ENCODE measurements at regions of chr4 and their contacts with region 1.

Region 1: DNA sequence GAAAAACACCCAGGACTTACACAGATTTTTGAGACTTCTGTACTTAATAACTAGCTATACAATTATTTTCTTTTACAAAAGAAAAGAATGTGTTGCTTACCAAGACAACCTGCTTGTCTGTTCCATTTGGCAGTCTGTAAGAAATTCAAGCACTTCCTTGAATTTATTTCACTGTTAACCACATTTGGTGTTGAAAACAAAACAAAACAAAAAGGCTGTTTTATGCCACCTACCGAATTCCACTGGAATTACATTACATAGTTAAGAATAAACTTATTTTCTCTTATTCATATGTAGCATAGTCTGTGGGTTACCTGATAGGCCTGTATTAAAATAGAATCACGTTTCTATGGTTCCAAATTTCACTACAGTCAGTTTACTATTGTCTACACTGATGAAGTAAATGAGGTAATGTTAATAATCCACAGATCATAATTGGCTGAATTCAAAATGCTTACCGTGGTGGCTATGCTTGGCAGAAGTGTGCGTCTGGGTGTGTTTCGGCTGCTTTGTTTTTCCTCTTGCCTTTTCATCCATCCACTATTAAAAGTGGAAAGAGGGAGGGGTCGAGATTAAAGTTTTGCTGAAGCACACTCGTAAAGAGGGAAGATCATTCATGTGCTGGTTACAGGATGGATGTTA is at the start of gene TLR1:
- DNase-seq: no peak
- ATAC-seq: peak; percentile 77 to 86 (median 82)
- H3K4me3 ChIP-seq: peak within 1 kb of the TSS; percentile 8 to 42 (median 31)
- H3K27ac ChIP-seq: peak within 1 kb of the TSS; percentile 74 to 84 (median 82)
- H3K4me1 ChIP-seq: peaks cover 0 to 5% (median 0%) of the 10 kb centered on the region in 4 donors
- H3K27me3 ChIP-seq: no peaks in the 10 kb centered on the region
- CTCF ChIP-seq: peak; percentile 62 to 70 (median 65)
- POLR2A ChIP-seq: no peak
- total RNA-seq, gene TLR1: 5.1 to 10.5 (median 7.8) TPM

Region 2: GRCh38 chr4:38574559-38575333 is 230.0 kb before region 1 on chr4:
- intact Hi-C with region 1: no loop called
- DNase-seq: peak; percentile 77 to 85 (median 83)
- ATAC-seq: peak; percentile 93 to 97 (median 97)
- H3K4me3 ChIP-seq: no peak overlapping the region
- H3K27ac ChIP-seq: no peak overlapping the region
- H3K4me1 ChIP-seq: peaks cover 0 to 9% (median 0%) of the 10 kb centered on the region in 4 donors
- H3K27me3 ChIP-seq: no peaks in the 10 kb centered on the region
- CTCF ChIP-seq: no peak
- POLR2A ChIP-seq: no peak

Region 3: DNA sequence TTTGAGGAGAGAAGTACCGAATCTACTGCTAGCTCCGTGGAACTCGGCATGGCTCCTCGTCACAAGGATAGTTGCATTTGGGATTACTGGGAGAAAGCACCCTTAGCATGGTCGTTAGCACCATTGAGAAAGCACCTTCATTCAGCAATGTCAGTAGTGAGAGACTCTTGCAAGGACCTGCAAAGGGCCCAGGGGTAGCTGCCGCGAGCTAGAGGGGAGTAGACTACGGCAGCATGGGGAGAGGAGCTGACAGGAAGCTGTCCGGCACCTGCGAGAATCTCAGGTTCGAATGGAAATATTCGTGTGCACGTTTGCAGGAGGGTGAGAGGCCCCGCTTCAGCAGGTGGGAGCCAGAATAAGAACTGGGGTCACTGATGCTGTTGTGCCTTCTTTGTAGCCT is 42.2 kb before region 1 on chr4:
- intact Hi-C with region 1: loop called in 1 of 2 experiments (anchors 5 kb)
- DNase-seq: no peak
- ATAC-seq: no peak
- H3K4me3 ChIP-seq: no peak overlapping the region
- H3K27ac ChIP-seq: no peak overlapping the region
- H3K4me1 ChIP-seq: no peaks in the 10 kb centered on the region
- H3K27me3 ChIP-seq: no peaks in the 10 kb centered on the region
- CTCF ChIP-seq: no peak
- POLR2A ChIP-seq: no peak

Measured in right lobe of liver (tissue), 6 donors.